Right lobe of liver (tissue), 6 donors: ENCODE measurements at regions of chr6 and their contacts with region 1.

Region 1: GRCh38 chr6:14210663-14211561 is 93.3 kb downstream of the CD83 start:
- DNase-seq: peak; percentile 95 to 96 (median 96)
- ATAC-seq: peak; percentile 91 to 99 (median 94)
- H3K4me3 ChIP-seq: peak overlapping the region; percentile 75 to 85 (median 76)
- H3K27ac ChIP-seq: peak overlapping the region; percentile 45 to 83 (median 76)
- H3K4me1 ChIP-seq: peaks cover 0 to 11% (median 0%) of the 10 kb centered on the region in 4 donors
- H3K27me3 ChIP-seq: no peaks in the 10 kb centered on the region
- CTCF ChIP-seq: peak; percentile 49 to 99 (median 76)
- POLR2A ChIP-seq: peak; percentile 42

Region 2: DNA sequence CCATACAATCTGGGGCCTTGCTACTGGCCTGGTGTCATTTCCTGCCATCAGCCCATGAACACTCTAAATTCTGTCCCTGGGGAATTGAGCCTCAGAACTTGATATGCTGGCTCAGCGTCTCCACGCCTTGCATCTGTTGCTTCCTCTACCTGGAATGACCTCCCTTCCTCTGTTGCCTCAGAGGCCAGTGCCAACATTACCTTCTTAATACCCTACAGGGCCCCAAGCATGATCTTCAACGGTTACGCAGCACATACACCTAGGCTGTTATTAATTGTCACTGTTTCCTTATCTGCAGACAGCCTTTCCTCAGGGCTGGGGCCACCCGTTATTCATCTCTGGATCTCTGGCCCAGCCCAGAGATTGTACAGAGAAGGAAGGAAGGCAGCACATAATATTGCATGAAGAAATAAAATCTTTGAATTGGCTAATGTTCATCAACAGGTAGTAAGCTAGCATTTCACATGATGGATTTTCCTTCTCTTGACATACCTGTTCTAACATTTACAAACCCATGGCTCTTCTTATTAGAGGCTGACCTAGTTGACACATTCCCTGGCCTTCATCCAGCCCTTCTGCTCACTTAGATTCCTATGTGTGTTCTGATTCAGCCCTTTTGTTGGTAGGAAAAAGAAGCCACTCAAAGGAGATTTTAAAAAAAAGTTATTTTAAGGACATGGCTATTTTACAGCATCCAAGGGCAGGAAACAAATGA is 294.5 kb before region 1 on chr6:
- intact Hi-C with region 1: no loop called
- DNase-seq: no peak
- ATAC-seq: no peak
- H3K4me3 ChIP-seq: no peak overlapping the region
- H3K27ac ChIP-seq: no peak overlapping the region
- H3K4me1 ChIP-seq: no peaks in the 10 kb centered on the region
- H3K27me3 ChIP-seq: peaks cover 0 to 2% of the 10 kb centered on the region in 2 donors
- CTCF ChIP-seq: no peak
- POLR2A ChIP-seq: no peak

Region 3: GRCh38 chr6:13979284-13980171 is 231.4 kb before region 1 on chr6:
- intact Hi-C with region 1: no loop called
- DNase-seq: no peak
- ATAC-seq: no peak
- H3K4me3 ChIP-seq: no peak overlapping the region
- H3K27ac ChIP-seq: no peak overlapping the region
- H3K4me1 ChIP-seq: no peaks in the 10 kb centered on the region
- H3K27me3 ChIP-seq: no peaks in the 10 kb centered on the region
- CTCF ChIP-seq: no peak
- POLR2A ChIP-seq: no peak

Region 4: GRCh38 chr6:14037402-14038277 is 173.3 kb before region 1 on chr6:
- intact Hi-C with region 1: no loop called
- DNase-seq: no peak
- ATAC-seq: no peak
- H3K4me3 ChIP-seq: no peak overlapping the region
- H3K27ac ChIP-seq: no peak overlapping the region
- H3K4me1 ChIP-seq: no peaks in the 10 kb centered on the region
- H3K27me3 ChIP-seq: no peaks in the 10 kb centered on the region
- CTCF ChIP-seq: no peak
- POLR2A ChIP-seq: no peak

Region 5: GRCh38 chr6:14573703-14574306 is 362.9 kb after region 1 on chr6:
- intact Hi-C with region 1: loop called in 1 of 2 experiments (anchors 10 kb)
- DNase-seq: no peak
- ATAC-seq: no peak
- H3K4me3 ChIP-seq: no peak overlapping the region
- H3K27ac ChIP-seq: no peak overlapping the region
- H3K4me1 ChIP-seq: peaks cover 0 to under 1% (median 0%) of the 10 kb centered on the region in 4 donors
- H3K27me3 ChIP-seq: no peaks in the 10 kb centered on the region
- CTCF ChIP-seq: no peak
- POLR2A ChIP-seq: no peak